PC-3 (cell line): ENCODE measurements at regions of chr10 and their contacts with region 1.

Region 1: DNA sequence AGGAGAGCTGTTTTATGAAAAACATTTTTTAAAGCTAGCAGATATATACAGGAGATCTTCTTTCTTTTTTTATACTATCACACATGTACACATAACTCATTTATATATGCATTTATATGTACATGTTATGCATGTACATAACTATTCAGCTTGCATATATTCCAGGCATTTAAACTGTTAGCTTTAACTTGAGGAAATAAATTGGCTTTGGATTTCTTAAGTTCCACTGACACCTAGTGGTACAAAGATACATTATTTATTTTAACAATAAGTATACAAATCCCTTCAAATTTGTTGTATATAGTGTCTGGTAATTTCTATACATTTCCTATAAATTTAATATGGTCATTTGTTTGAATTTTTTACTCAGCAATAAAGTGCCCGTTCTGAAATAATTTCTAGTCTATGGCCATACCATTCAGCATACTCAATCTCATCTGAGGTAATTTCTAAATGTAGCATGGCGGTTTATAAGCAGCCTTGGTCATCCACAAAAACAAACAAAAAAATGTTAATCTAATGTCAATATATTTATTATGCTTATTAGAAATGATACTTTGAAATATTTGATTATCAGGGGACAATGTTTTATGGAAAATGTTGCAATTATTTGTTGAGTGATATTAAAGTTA is 11.6 kb downstream of the ZDHHC6 start:
- DNase-seq: peak; percentile 60
- ATAC-seq: no peak
- H3K4me3 ChIP-seq: no peak overlapping the region
- H3K27ac ChIP-seq: no peak overlapping the region
- H3K4me1 ChIP-seq: no peaks in the 10 kb centered on the region
- H3K27me3 ChIP-seq: no peaks in the 10 kb centered on the region
- CTCF ChIP-seq: peak; percentile 68

Region 2: DNA sequence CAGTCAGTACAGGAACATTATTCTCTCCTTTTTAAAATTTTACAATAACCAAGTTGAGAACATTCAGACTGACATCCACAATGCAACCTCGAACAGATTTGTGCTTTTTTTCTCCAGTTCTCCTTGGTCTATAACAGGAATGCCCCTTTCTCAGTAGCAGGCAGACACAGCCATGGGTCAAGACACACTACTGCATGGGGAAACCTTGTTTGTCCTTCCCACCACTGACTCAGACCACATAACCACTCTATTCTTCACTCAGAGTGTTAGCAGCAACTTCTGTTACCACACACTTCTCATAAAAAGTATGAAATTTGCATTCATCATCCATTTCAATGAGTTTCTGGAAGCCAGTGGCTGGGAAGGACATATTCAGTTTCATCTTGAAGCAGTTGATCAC is 936.5 kb before region 1 on chr10:
- CTCF ChIA-PET with region 1: no interaction called
- POLR2A ChIA-PET with region 1: no interaction called
- intact Hi-C with region 1: no loop called
- DNase-seq: no peak
- ATAC-seq: no peak
- H3K4me3 ChIP-seq: no peak overlapping the region
- H3K27ac ChIP-seq: no peak overlapping the region
- H3K4me1 ChIP-seq: no peaks in the 10 kb centered on the region
- H3K27me3 ChIP-seq: no peaks in the 10 kb centered on the region
- CTCF ChIP-seq: no peak

Region 3: GRCh38 chr10:112140110-112140970 is 294.8 kb before region 1 on chr10:
- CTCF ChIA-PET with region 1: no interaction called
- POLR2A ChIA-PET with region 1: no interaction called
- intact Hi-C with region 1: loop called (anchors 10 kb)
- DNase-seq: peak; percentile 84
- ATAC-seq: peak; percentile 95
- H3K4me3 ChIP-seq: no peak overlapping the region
- H3K27ac ChIP-seq: no peak overlapping the region
- H3K4me1 ChIP-seq: 0 out of 2 replicates have a peak, but pooled peaks cover 3% of the 10 kb centered on the region
- H3K27me3 ChIP-seq: no peaks in the 10 kb centered on the region
- CTCF ChIP-seq: peak; percentile 91

Region 4: DNA sequence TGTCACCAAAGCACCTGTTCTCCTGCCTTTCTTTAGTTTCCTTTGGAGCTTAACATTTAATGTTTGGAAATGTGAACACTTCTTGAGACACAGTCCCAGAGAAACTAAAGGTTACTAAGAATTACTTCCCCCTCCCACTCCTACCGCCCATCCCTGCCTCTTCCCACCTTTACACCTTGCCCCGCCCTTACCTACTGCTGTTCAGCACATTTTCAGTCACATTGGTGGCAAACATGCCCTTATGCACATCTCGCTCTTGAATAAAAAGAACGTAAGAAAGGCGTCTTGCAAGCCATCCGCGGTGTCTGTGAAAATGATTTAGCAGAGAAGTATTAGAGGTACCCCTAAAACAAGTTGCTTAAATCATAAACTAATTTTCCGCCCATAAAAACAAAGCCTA is 259.7 kb before region 1 on chr10:
- CTCF ChIA-PET with region 1: no interaction called
- POLR2A ChIA-PET with region 1: no interaction called
- intact Hi-C with region 1: loop called (anchors 2 kb)
- DNase-seq: no peak
- ATAC-seq: no peak
- H3K4me3 ChIP-seq: no peak overlapping the region
- H3K27ac ChIP-seq: no peak overlapping the region
- H3K4me1 ChIP-seq: peaks cover 3% of the 10 kb centered on the region; the same call in 1 of the 2 replicates
- H3K27me3 ChIP-seq: no peaks in the 10 kb centered on the region
- CTCF ChIP-seq: no peak